ENCODE measurements at regions of chr2 and their contacts with region 1.

Region 1: DNA sequence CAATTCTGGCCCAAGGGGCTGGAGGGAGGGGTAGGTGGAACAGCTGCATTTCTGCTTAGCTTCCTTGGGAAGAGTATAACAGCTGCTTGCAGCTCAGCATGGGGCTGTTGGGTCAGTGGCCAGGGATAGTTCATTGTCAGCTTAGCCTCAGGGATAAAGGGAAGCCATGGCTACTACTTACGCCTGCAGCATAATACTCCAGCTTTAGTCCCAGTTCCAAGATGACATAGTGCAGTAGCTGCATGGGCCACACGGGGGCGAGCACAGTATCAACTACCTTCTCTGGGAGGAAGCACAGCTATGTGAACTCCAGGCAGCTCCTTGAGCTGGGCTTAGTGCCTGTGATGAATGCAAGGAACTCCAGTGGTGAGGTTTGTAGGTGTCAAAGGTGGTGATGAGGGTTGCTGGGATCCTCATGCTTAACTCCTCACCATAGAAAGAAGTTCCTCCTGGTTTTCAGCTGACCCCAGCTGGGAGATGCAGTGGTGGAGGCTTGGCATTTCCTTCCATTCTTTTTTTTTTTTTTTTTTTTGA is 35.4 kb upstream of the RHOB start:
- DNase-seq: peak; percentile 87
- ATAC-seq: peak; percentile 97
- H3K4me3 Mint-ChIP-seq: no peak overlapping the region
- H3K27ac Mint-ChIP-seq: no peak overlapping the region
- H3K4me1 Mint-ChIP-seq: no peaks in the 10 kb centered on the region
- H3K27me3 Mint-ChIP-seq: peaks cover 8% of the 10 kb centered on the region

Region 2: GRCh38 chr2:20424300-20425290 is 13.2 kb after region 1 on chr2:
- CTCF ChIA-PET with region 1: interaction called, 94 read pairs
- POLR2A ChIA-PET with region 1: no interaction called
- intact Hi-C with region 1: no loop called
- DNase-seq: peak; percentile 36
- ATAC-seq: peak; percentile 38
- H3K4me3 Mint-ChIP-seq: no peak overlapping the region
- H3K27ac Mint-ChIP-seq: peak overlapping the region; percentile 34
- H3K4me1 Mint-ChIP-seq: peaks cover 16% of the 10 kb centered on the region
- H3K27me3 Mint-ChIP-seq: peaks cover 3% of the 10 kb centered on the region

Region 3: GRCh38 chr2:20446917-20447436 is 35.5 kb after region 1 on chr2 and contains the start of gene RHOB:
- CTCF ChIA-PET with region 1: interaction called, 15 read pairs
- POLR2A ChIA-PET with region 1: interaction called, 8 read pairs
- intact Hi-C with region 1: no loop called
- DNase-seq: peak; percentile 93
- ATAC-seq: peak; percentile 99
- H3K4me3 Mint-ChIP-seq: peak within 1 kb of the TSS; percentile 71
- H3K27ac Mint-ChIP-seq: no peak within 1 kb of the TSS
- H3K4me1 Mint-ChIP-seq: no peaks in the 10 kb centered on the region
- H3K27me3 Mint-ChIP-seq: peaks cover 23% of the 10 kb centered on the region
- total RNA-seq, gene RHOB: 7.5 TPM

Region 4: GRCh38 chr2:20642055-20642971 is 230.9 kb after region 1 on chr2:
- CTCF ChIA-PET with region 1: interaction called, 40 read pairs
- POLR2A ChIA-PET with region 1: no interaction called
- intact Hi-C with region 1: loop called (anchors 1 kb)
- DNase-seq: peak; percentile 85
- ATAC-seq: peak; percentile 99
- H3K4me3 Mint-ChIP-seq: no peak overlapping the region
- H3K27ac Mint-ChIP-seq: no peak overlapping the region
- H3K4me1 Mint-ChIP-seq: no peaks in the 10 kb centered on the region
- H3K27me3 Mint-ChIP-seq: no peaks in the 10 kb centered on the region